ENCODE measurements at regions of chr4 and their contacts with region 1.

Region 1: DNA sequence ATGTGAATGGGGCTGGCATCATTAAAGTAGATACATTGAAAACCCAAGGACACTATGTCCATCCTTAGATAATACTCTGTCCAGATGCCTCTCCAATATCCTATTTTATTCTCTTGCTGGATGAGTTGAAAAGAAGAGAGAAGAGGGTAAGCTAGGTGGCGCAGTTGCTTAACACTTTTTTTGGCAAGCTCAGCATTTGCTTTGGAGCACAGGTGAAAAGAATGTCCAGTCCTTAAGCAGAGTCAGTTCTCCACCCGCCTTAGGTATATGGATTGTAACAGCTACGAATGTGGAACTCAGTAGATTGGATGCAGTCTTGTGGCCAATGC is 208.4 kb downstream of the NWD2 start:
- DNase-seq: no peak
- H3K4me3 ChIP-seq: peak overlapping the region; percentile 31 to 69 (median 48); a peak in 7 of 8 replicates
- H3K27ac ChIP-seq: no peak overlapping the region
- H3K4me1 ChIP-seq: peaks cover 0 to 5% (median 1%) of the 10 kb centered on the region in 4 experiments; a peak in 2 of 7 replicates
- H3K27me3 ChIP-seq: peaks cover 0 to 17% (median 6%) of the 10 kb centered on the region in 4 experiments; a peak in 5 of 7 replicates
- CTCF ChIP-seq: peak in 2 of 3 experiments; percentile 69 to 72; a peak in 3 of 4 replicates
- EP300 ChIP-seq: no peak
- POLR2A ChIP-seq: no peak
- RAD21 ChIP-seq: peak; percentile 81

Region 2: GRCh38 chr4:37197899-37198298 is 255.0 kb before region 1 on chr4:
- CTCF ChIA-PET with region 1: no interaction called
- POLR2A ChIA-PET with region 1: no interaction called
- DNase-seq: no peak
- H3K4me3 ChIP-seq: no peak overlapping the region
- H3K27ac ChIP-seq: no peak overlapping the region
- H3K4me1 ChIP-seq: no peaks in the 10 kb centered on the region
- H3K27me3 ChIP-seq: no peaks in the 10 kb centered on the region
- CTCF ChIP-seq: no peak
- EP300 ChIP-seq: no peak
- POLR2A ChIP-seq: no peak
- RAD21 ChIP-seq: no peak

Region 3: DNA sequence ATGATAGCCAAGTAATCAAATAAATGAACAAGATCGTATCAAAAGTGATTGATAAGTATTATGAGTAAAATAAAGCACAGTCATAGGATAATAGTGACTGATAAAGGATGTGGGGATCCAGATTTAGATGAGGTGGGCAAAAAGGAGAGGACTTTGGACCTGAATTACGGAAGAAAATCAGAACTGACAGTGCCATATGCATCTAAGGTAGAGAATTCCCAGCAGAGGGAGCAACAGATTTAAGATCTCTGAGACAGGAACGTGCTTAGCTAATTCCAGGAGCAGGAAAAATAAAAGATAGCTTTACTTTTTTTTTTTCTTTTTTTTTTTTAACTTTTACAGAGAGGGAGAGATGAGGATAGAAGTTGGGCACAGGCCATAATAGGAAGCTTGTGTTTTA is 18.4 kb before region 1 on chr4:
- CTCF ChIA-PET with region 1: interaction called, 12 read pairs
- POLR2A ChIA-PET with region 1: no interaction called
- DNase-seq: no peak
- H3K4me3 ChIP-seq: no peak overlapping the region
- H3K27ac ChIP-seq: no peak overlapping the region
- H3K4me1 ChIP-seq: no peaks in the 10 kb centered on the region
- H3K27me3 ChIP-seq: no peaks in the 10 kb centered on the region
- CTCF ChIP-seq: peak in 2 of 3 experiments; percentile 26 to 27; a peak in 2 of 4 replicates
- EP300 ChIP-seq: no peak
- POLR2A ChIP-seq: no peak
- RAD21 ChIP-seq: peak; percentile 43 to 46

Region 4: DNA sequence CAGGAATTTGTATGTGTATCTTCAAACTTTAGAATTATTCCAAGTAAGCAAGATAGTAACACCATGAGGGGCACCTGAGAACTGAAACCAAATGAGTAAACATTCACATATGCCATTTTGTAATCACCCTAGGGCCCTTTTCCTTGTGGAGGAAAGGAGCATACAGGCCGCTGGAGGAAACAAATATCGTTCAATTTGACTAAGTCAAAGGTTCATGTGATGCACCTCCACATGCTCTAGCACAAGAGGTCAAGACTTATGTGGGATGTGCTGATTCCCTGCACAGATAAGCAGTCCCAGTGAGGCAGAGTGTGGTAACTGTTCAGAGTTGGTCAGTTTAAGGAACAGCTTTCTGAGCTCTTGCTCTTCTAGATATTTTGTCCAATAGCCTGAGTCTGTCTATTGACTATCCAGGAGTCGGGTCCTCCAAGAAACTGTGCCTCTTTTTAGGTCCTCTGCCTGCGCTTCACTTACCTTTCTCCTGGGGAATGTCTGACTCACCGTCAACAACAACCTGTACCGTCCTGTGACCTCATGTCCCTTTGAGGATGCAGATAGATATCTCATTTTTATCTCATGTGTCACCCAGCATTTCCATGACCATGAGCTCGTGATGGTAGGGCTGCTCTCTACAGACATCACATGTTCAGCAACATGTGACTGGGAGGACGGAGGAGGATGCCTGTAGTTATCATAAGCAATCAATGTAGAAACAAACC is 11.5 kb before region 1 on chr4:
- CTCF ChIA-PET with region 1: interaction called, 22 read pairs
- POLR2A ChIA-PET with region 1: no interaction called
- DNase-seq: no peak
- H3K4me3 ChIP-seq: no peak overlapping the region
- H3K27ac ChIP-seq: no peak overlapping the region
- H3K4me1 ChIP-seq: no peaks in the 10 kb centered on the region
- H3K27me3 ChIP-seq: no peaks in the 10 kb centered on the region
- CTCF ChIP-seq: no peak
- EP300 ChIP-seq: no peak
- POLR2A ChIP-seq: no peak
- RAD21 ChIP-seq: no peak

Region 5: DNA sequence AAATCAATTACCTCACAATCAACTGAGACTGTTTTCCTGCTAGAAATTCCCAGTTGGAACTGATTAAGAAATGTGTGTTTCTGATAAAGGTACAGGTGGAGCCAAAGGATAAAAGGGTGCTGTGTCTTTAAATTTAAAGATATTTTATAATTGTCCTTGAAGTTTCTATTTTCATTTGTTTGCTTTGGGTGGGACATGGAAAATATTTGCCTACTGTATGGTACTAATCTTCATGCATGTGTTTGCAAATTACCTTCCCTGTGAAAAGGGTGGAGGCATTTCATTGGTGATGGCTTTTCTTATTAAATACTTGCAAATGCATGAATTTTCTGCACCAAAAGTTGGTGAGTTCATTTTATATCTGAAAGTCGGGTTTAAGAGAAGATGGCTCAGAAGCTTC is 17.3 kb after region 1 on chr4:
- CTCF ChIA-PET with region 1: interaction called, 18 read pairs
- POLR2A ChIA-PET with region 1: no interaction called
- DNase-seq: no peak
- H3K4me3 ChIP-seq: no peak overlapping the region
- H3K27ac ChIP-seq: no peak overlapping the region
- H3K4me1 ChIP-seq: no peaks in the 10 kb centered on the region
- H3K27me3 ChIP-seq: no peaks in the 10 kb centered on the region
- CTCF ChIP-seq: no peak
- EP300 ChIP-seq: no peak
- POLR2A ChIP-seq: no peak
- RAD21 ChIP-seq: no peak

Region 6: DNA sequence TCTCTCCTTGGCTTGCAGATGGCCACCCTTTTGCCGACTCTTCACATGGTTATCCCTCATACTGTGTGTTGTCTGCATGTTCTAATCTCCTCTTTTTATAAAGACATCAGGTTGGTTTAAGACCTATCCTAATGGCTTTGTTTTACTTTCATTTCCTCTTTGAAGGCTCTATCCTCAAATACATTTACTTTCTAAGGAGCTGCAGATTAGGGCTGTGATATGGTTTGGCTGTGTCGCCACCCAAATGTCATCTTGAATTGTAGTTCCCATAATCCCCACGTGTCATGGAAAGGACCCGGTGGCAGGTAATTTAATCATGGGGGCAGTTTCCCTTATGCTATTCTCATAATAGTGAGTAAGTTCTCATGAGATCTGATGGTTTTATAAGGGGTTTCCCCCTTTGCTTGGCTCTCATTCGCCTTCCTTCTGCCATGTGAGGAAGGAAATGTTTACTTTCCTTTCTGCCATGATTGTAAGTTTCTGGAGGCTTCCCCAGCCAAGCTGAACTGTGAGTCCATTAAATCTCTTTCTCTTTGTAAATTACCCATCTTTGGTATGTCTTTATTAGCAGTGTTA is 28.7 kb after region 1 on chr4:
- CTCF ChIA-PET with region 1: no interaction called
- POLR2A ChIA-PET with region 1: no interaction called
- DNase-seq: no peak
- H3K4me3 ChIP-seq: no peak overlapping the region
- H3K27ac ChIP-seq: no peak overlapping the region
- H3K4me1 ChIP-seq: no peaks in the 10 kb centered on the region
- H3K27me3 ChIP-seq: no peaks in the 10 kb centered on the region
- CTCF ChIP-seq: no peak
- EP300 ChIP-seq: no peak
- POLR2A ChIP-seq: no peak
- RAD21 ChIP-seq: no peak

Region 7: GRCh38 chr4:37561803-37562207 is 108.9 kb after region 1 on chr4:
- CTCF ChIA-PET with region 1: interaction called, 107 read pairs
- POLR2A ChIA-PET with region 1: no interaction called
- DNase-seq: no peak
- H3K4me3 ChIP-seq: no peak overlapping the region
- H3K27ac ChIP-seq: no peak overlapping the region
- H3K4me1 ChIP-seq: peaks cover 0 to 4% (median 0%) of the 10 kb centered on the region in 4 experiments; a peak in 1 of 7 replicates
- H3K27me3 ChIP-seq: no peaks in the 10 kb centered on the region
- CTCF ChIP-seq: no peak
- EP300 ChIP-seq: no peak
- POLR2A ChIP-seq: no peak
- RAD21 ChIP-seq: no peak

Region 8: GRCh38 chr4:37567841-37568240 is 114.9 kb after region 1 on chr4:
- CTCF ChIA-PET with region 1: interaction called, 107 read pairs
- POLR2A ChIA-PET with region 1: no interaction called
- DNase-seq: no peak
- H3K4me3 ChIP-seq: no peak overlapping the region
- H3K27ac ChIP-seq: no peak overlapping the region
- H3K4me1 ChIP-seq: peaks cover 0 to 4% (median 0%) of the 10 kb centered on the region in 4 experiments; a peak in 1 of 7 replicates
- H3K27me3 ChIP-seq: no peaks in the 10 kb centered on the region
- CTCF ChIP-seq: no peak
- EP300 ChIP-seq: no peak
- POLR2A ChIP-seq: no peak
- RAD21 ChIP-seq: no peak

Region 9: GRCh38 chr4:37903901-37904300 is 451.0 kb after region 1 on chr4:
- CTCF ChIA-PET with region 1: no interaction called
- POLR2A ChIA-PET with region 1: no interaction called
- DNase-seq: no peak
- H3K4me3 ChIP-seq: no peak overlapping the region
- H3K27ac ChIP-seq: no peak overlapping the region
- H3K4me1 ChIP-seq: peaks cover 0 to 7% (median 1%) of the 10 kb centered on the region in 4 experiments; a peak in 5 of 7 replicates
- H3K27me3 ChIP-seq: no peaks in the 10 kb centered on the region
- CTCF ChIP-seq: no peak
- EP300 ChIP-seq: no peak
- POLR2A ChIP-seq: no peak
- RAD21 ChIP-seq: no peak

Measured in H1 (cell line).